ENCODE measurements at regions of chr15 and their contacts with region 1.

Region 1: GRCh38 chr15:44738340-44738984 is 2.1 kb downstream of the TRIM69 start:
- DNase-seq: no peak
- ATAC-seq: peak; percentile 67 to 81
- H3K4me3 ChIP-seq: no peak overlapping the region
- H3K27ac ChIP-seq: no peak overlapping the region
- H3K4me1 ChIP-seq: peaks cover 20% of the 10 kb centered on the region
- H3K27me3 ChIP-seq: no peaks in the 10 kb centered on the region
- CTCF ChIP-seq: peak; percentile 70

Region 2: DNA sequence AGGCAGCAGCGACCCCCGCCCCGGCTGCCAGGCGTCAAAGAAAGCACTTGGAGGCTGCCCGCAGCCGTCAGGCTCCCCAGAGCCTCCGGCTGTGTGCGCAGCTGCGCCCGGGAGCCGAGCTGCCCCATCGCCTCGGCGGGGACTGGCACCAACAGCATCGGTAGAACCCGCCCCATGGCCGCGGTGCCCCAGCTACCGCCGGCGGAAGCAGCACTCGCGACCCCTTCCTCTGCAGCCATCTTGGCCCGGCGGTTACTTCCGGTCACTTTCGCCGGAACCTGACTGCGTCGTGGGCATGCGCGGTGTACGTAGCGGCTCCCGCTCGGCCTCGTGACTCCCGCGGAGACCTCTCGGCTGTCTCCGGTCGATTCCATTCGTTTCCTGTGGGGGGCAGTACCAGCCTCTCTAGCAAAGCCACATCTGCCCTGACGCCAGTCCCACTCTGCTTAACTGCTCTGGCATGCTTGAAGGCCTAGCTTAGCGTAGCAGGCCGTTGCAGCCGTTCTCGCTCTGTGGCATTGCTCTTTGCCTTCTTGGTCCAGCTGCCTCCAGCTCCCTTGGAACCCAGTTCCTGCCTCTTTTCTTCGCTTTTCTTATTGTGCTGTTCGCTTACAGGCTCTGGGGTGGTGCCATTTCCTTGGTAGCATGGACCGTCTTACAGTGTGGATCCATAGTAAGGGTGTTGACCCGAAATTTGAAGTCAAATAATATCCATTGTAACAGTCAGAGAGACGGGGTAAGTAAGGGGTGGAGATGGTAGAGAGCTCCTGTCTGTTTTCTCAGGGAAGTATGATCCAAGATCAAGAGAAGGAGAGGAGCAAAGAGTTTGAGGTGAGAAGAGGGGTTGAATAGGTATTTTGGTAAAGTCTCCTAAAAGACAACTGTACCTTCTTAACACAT is 74.8 kb before region 1 on chr15 and contains the start of gene SPG11:
- intact Hi-C with region 1: loop called (anchors 10 kb)
- DNase-seq: peak; percentile 99
- ATAC-seq: peak; percentile 98 to 99
- H3K4me3 ChIP-seq: peak within 1 kb of the TSS; percentile 82
- H3K27ac ChIP-seq: peak within 1 kb of the TSS; percentile 98
- H3K4me1 ChIP-seq: peaks cover 37% of the 10 kb centered on the region
- H3K27me3 ChIP-seq: no peaks in the 10 kb centered on the region
- CTCF ChIP-seq: peak; percentile 97
- total RNA-seq, gene SPG11: 99.7 TPM

Region 3: GRCh38 chr15:44798826-44799225 is 60.4 kb after region 1 on chr15:
- intact Hi-C with region 1: no loop called
- DNase-seq: no peak
- ATAC-seq: no peak
- H3K4me3 ChIP-seq: no peak overlapping the region
- H3K27ac ChIP-seq: no peak overlapping the region
- H3K4me1 ChIP-seq: no peaks in the 10 kb centered on the region
- H3K27me3 ChIP-seq: no peaks in the 10 kb centered on the region
- CTCF ChIP-seq: no peak